Posterior cingulate gyrus (tissue), 11 donors: ENCODE measurements at regions of chr15 and their contacts with region 1.

Region 1: GRCh38 chr15:45372041-45372995 is 6.0 kb downstream of the GATM start:
- DNase-seq: peak in 3 of 10 donors; percentile 17 to 47 (median 22)

Region 2: DNA sequence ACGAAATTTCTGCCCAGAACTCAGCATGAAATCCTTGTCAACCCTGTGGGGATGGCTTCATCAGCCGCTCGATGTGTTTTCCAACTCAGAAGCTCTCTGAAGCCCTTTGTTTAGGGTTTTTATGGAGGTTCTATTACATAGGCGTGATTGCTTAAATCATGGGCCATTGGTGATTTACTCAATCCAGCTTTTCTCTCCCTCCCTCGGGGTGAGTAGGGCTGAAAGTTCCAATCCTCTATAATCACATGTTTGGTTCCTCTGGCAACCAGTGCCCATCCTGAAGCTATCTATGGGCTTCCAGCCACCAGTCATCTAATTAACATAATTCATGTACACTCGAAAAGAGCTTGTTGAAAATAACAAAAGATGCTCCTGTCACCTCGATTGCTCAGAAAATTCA is 45.6 kb before region 1 on chr15:
- intact Hi-C with region 1: loop called (anchors 5 kb)
- DNase-seq: peak in 2 of 10 donors; percentile 9 to 29